Caco-2 (cell line): ENCODE measurements at regions of chr1 and their contacts with region 1.

Region 1: DNA sequence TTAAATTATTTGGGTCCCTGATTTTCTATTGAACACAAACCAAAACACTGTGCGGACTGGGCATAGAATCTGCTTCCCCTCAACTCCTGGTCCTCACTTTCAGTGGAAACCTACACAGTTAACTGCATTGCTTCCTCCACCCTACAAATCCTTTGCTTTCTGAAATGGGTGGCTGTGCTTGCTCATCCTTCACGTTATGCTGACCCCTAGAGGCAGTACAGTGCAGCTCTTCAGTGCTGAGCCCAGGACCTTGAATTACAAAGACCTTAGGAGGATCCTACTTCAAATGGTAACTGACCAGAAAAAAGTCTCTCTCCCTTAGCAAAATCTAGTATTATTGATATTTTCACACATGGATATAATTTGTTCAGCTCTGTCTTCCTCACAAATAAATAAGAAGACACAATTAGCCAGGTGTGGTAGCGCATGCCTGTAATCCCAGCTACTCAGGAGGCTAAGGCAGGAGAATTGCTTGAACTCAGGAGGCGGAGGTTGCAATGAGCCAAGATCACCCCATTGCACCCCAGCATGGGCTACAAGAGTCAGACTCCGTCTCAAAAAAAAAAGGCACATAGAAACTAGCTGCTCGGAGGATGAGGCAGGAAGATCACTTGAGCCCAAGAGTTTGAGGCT is 63.4 kb upstream of the L1TD1 start:
- DNase-seq: peak; percentile 51 to 56
- H3K4me3 ChIP-seq: no peak overlapping the region
- H3K4me3 Mint-ChIP-seq: no peak overlapping the region
- H3K27ac Mint-ChIP-seq: no peak overlapping the region
- H3K4me1 ChIP-seq: no peaks in the 10 kb centered on the region
- H3K4me1 Mint-ChIP-seq: no peaks in the 10 kb centered on the region
- H3K27me3 ChIP-seq: no peaks in the 10 kb centered on the region
- H3K27me3 Mint-ChIP-seq: no peaks in the 10 kb centered on the region
- CTCF ChIP-seq: peak; percentile 60 to 78

Region 2: DNA sequence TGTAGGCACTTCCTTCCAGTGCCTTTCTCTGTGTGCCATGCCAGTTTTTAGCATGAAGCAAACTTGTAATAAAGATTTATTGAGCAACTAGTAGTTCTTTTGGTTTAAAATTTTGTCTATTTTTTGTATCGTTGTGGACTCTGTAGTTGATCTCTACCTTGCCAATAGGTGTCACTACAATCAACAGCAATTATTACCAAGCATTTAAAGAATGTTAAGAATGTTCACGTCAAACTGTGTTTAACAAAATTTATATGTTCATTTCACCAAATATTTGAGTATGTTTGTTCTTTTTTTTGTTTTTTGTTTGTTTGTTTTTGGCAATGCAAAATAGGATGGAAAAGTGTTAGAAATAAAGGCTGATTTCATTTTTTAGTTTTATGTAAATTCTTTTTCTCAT is 180.8 kb before region 1 on chr1:
- CTCF ChIA-PET with region 1: no interaction called
- POLR2A ChIA-PET with region 1: no interaction called
- intact Hi-C with region 1: loop called (anchors 10 kb)
- DNase-seq: no peak
- H3K4me3 ChIP-seq: no peak overlapping the region
- H3K4me3 Mint-ChIP-seq: no peak overlapping the region
- H3K27ac Mint-ChIP-seq: no peak overlapping the region
- H3K4me1 ChIP-seq: peaks cover 9% of the 10 kb centered on the region
- H3K4me1 Mint-ChIP-seq: peaks cover 4% of the 10 kb centered on the region
- H3K27me3 ChIP-seq: no peaks in the 10 kb centered on the region
- H3K27me3 Mint-ChIP-seq: no peaks in the 10 kb centered on the region
- CTCF ChIP-seq: peak in 1 of 2 experiments; percentile 27

Region 3: DNA sequence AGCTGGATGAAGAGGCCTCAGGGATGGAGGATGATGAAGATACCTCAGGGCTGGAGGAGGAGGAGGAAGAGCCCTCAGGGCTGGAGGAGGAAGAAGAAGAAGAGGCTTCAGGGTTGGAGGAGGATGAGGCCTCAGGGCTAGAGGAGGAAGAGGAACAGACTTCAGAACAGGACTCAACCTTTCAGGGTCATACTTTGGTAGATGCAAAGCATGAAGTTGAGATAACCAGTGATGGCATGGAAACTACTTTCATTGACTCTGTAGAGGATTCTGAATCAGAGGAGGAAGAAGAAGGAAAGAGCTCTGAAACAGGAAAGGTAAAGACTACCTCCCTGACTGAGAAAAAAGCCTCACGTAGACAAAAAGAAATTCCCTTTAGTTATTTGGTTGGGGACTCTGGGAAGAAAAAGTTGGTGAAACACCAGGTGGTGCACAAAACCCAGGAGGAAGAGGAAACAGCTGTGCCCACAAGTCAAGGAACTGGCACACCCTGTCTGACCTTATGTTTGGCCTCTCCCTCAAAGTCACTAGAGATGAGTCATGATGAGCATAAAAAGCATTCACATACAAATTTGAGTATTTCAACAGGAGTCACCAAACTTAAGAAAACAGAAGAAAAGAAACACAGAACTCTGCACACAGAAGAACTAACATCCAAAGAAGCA is 78.9 kb after region 1 on chr1:
- CTCF ChIA-PET with region 1: no interaction called
- POLR2A ChIA-PET with region 1: no interaction called
- intact Hi-C with region 1: no loop called
- DNase-seq: no peak
- H3K4me3 ChIP-seq: no peak overlapping the region
- H3K4me3 Mint-ChIP-seq: no peak overlapping the region
- H3K27ac Mint-ChIP-seq: no peak overlapping the region
- H3K4me1 ChIP-seq: no peaks in the 10 kb centered on the region
- H3K4me1 Mint-ChIP-seq: no peaks in the 10 kb centered on the region
- H3K27me3 ChIP-seq: no peaks in the 10 kb centered on the region
- H3K27me3 Mint-ChIP-seq: no peaks in the 10 kb centered on the region
- CTCF ChIP-seq: no peak